IMR-90 (cell line): ENCODE measurements at regions of chr2 and their contacts with region 1.

Region 1: GRCh38 chr2:164928101-164928673 is 27.1 kb downstream of the SLC38A11 start:
- DNase-seq: no peak
- ATAC-seq: no peak
- H3K4me3 ChIP-seq: no peak overlapping the region
- H3K27ac ChIP-seq: no peak overlapping the region
- H3K4me1 ChIP-seq: no peaks in the 10 kb centered on the region
- H3K27me3 ChIP-seq: no peaks in the 10 kb centered on the region
- CTCF ChIP-seq: no peak
- POLR2A ChIP-seq: no peak
- RAD21 ChIP-seq: no peak

Region 2: DNA sequence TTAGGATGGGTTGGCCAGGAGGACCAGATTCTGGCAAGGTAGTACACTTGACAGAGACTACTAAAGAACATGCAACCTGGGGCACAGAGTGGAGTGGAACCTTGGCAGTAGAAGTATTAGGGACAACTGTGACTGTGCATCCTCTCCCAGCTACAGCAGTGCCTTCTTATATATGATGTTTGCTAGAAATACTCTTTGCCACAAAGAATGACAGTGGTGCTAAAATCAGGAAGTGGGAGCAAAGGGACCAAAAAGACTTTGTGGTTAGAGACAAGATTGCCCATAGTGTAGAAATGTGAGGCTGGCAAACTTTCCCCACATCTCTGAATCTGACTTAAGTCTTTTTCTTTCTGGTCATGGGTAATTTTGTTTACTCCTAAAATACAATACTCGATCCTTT is 36.5 kb after region 1 on chr2:
- CTCF ChIA-PET with region 1: no interaction called
- POLR2A ChIA-PET with region 1: no interaction called
- dilution Hi-C with region 1: no loop called
- in situ Hi-C with region 1: loop called (anchors 5 kb)
- intact Hi-C with region 1: no loop called
- DNase-seq: no peak
- ATAC-seq: no peak
- H3K4me3 ChIP-seq: no peak overlapping the region
- H3K27ac ChIP-seq: no peak overlapping the region
- H3K4me1 ChIP-seq: peaks cover 8% of the 10 kb centered on the region; the same call in 1 of the 2 replicates
- H3K27me3 ChIP-seq: no peaks in the 10 kb centered on the region
- CTCF ChIP-seq: no peak
- POLR2A ChIP-seq: no peak
- RAD21 ChIP-seq: no peak

Region 3: GRCh38 chr2:164981217-164981990 is 53.2 kb after region 1 on chr2:
- CTCF ChIA-PET with region 1: no interaction called
- POLR2A ChIA-PET with region 1: no interaction called
- dilution Hi-C with region 1: no loop called
- in situ Hi-C with region 1: no loop called
- intact Hi-C with region 1: no loop called
- DNase-seq: peak; percentile 58
- ATAC-seq: peak; percentile 70
- H3K4me3 ChIP-seq: no peak overlapping the region
- H3K27ac ChIP-seq: no peak overlapping the region
- H3K4me1 ChIP-seq: peaks cover 7% of the 10 kb centered on the region
- H3K27me3 ChIP-seq: no peaks in the 10 kb centered on the region
- CTCF ChIP-seq: no peak
- POLR2A ChIP-seq: no peak
- RAD21 ChIP-seq: no peak